H1 (cell line): ENCODE measurements at regions of chr20 and their contacts with region 1.

Region 1: GRCh38 chr20:10686356-10687133 is 12.7 kb upstream of the JAG1 start:
- DNase-seq: no peak
- H3K4me3 ChIP-seq: no peak overlapping the region
- H3K27ac ChIP-seq: no peak overlapping the region
- H3K4me1 ChIP-seq: peaks cover 0 to 3% (median 0%) of the 10 kb centered on the region in 4 experiments; a peak in 1 of 7 replicates
- H3K27me3 ChIP-seq: no peaks in the 10 kb centered on the region
- CTCF ChIP-seq: no peak
- EP300 ChIP-seq: no peak
- POLR2A ChIP-seq: no peak
- RAD21 ChIP-seq: no peak

Region 2: GRCh38 chr20:10596726-10597125 is 89.8 kb before region 1 on chr20:
- CTCF ChIA-PET with region 1: no interaction called
- POLR2A ChIA-PET with region 1: no interaction called
- DNase-seq: no peak
- H3K4me3 ChIP-seq: no peak overlapping the region
- H3K27ac ChIP-seq: no peak overlapping the region
- H3K4me1 ChIP-seq: no peaks in the 10 kb centered on the region
- H3K27me3 ChIP-seq: no peaks in the 10 kb centered on the region
- CTCF ChIP-seq: no peak
- EP300 ChIP-seq: no peak
- POLR2A ChIP-seq: no peak
- RAD21 ChIP-seq: no peak

Region 3: GRCh38 chr20:10696650-10697049 is 10.1 kb after region 1 on chr20:
- CTCF ChIA-PET with region 1: interaction called, 24 read pairs
- POLR2A ChIA-PET with region 1: no interaction called
- DNase-seq: peak; percentile 15 to 87
- H3K4me3 ChIP-seq: no peak overlapping the region
- H3K27ac ChIP-seq: no peak overlapping the region
- H3K4me1 ChIP-seq: peaks cover 0 to 4% (median 2%) of the 10 kb centered on the region in 4 experiments; a peak in 3 of 7 replicates
- H3K27me3 ChIP-seq: no peaks in the 10 kb centered on the region
- CTCF ChIP-seq: peak; percentile 56 to 87 (median 73)
- EP300 ChIP-seq: no peak
- POLR2A ChIP-seq: no peak
- RAD21 ChIP-seq: peak; percentile 51 to 70